ENCODE measurements at regions of chr13 and their contacts with region 1.

Region 1: DNA sequence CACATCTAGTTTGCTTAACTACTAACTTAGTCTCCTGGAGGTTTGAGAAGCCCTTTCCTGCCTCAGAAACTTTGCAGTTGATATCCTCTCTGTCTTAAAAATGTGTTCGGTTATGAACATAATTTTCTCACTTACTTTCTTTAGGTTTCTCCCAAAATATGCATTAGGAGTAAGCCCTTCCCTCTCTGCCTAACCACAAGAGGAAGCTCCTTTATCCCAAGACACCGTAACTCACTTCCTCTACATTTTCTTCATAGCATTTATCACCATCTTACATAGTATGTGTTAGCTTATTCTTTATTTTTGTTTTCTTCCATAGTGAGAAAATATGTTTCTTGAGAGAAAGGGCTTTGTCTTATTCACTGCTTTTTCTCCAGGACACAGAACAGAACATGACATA is 952.5 kb upstream of the ATXN8OS start:
- DNase-seq: no peak
- ATAC-seq: no peak
- H3K4me3 Mint-ChIP-seq: no peak overlapping the region
- H3K27ac Mint-ChIP-seq: no peak overlapping the region
- H3K4me1 Mint-ChIP-seq: no peaks in the 10 kb centered on the region
- H3K27me3 Mint-ChIP-seq: no peaks in the 10 kb centered on the region

Region 2: DNA sequence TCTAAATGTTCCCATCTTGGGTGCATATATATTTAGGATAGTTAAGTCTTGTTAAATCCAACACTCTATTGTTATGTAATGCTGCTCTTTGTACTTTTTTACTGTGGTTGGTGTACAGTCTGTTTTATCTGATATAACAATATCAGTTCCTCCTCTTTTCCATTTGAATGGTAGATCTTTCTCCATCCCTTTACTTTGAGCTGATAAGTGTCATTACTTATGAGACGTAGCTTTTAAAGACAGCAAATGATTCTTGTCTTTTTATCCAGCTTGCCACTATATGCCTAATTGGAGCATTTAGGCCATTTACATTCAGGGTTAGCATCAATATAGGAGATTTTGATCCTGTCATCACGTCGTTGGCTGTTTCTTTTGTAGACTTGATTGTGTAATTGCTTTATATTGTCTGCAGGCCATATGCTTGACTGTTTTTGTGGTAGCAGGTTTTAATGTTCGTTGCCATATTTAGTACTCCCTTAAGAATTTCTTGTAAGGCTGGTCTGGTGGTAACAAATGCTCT is 58.3 kb after region 1 on chr13:
- CTCF ChIA-PET with region 1: no interaction called
- POLR2A ChIA-PET with region 1: no interaction called
- intact Hi-C with region 1: loop called in 1 of 2 experiments (anchors 10 kb)
- DNase-seq: no peak
- ATAC-seq: no peak
- H3K4me3 Mint-ChIP-seq: no peak overlapping the region
- H3K27ac Mint-ChIP-seq: no peak overlapping the region
- H3K4me1 Mint-ChIP-seq: no peaks in the 10 kb centered on the region
- H3K27me3 Mint-ChIP-seq: no peaks in the 10 kb centered on the region

Region 3: DNA sequence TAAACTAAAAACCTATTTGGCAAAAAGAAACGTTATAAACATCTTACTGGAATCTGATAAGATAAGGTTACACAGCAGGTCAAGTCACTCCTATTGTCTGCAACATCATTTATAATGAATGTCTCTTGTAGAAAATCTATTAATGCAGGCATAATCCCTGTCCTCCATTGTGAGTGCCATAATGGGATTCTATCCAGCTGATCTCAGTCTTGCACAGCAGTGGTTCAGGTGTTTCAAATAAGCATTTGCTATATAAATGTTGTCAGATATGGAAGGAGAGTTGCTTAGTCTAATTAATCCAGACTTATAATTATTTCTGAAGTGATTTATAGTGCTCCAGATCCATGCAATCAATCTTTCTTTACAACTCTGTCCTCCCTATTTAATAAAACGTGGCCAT is 766.0 kb after region 1 on chr13:
- CTCF ChIA-PET with region 1: no interaction called
- POLR2A ChIA-PET with region 1: no interaction called
- intact Hi-C with region 1: no loop called
- DNase-seq: no peak
- ATAC-seq: no peak
- H3K4me3 Mint-ChIP-seq: no peak overlapping the region
- H3K27ac Mint-ChIP-seq: no peak overlapping the region
- H3K4me1 Mint-ChIP-seq: no peaks in the 10 kb centered on the region
- H3K27me3 Mint-ChIP-seq: no peaks in the 10 kb centered on the region